ENCODE measurements at regions of chr1 and their contacts with region 1.

Region 1: GRCh38 chr1:86018283-86018923 is 138.2 kb downstream of the COL24A1 start:
- DNase-seq: peak; percentile 40
- H3K4me3 ChIP-seq: no peak overlapping the region
- H3K27ac ChIP-seq: no peak overlapping the region
- H3K4me1 ChIP-seq: no peaks in the 10 kb centered on the region
- CTCF ChIP-seq: peak; percentile 97

Region 2: DNA sequence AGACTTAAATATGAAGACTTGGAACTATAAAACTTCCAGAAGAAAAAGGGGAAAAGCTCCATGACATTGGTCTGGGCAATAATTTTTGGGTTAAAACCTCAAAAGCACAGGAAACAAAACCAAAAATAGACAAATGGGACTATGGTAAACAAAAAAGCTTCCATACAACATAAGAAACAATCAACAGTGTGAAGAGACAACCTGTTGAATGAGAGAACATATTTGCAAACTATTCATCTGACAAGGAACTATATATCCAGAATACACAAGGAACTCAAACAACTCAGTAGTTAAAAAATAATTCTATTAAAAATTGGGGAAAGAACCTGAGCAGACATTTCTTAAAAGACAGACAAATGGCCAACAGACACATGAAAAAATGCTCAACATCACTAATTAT is 117.5 kb before region 1 on chr1:
- CTCF ChIA-PET with region 1: no interaction called
- POLR2A ChIA-PET with region 1: no interaction called
- intact Hi-C with region 1: loop called (anchors 10 kb)
- DNase-seq: no peak
- H3K4me3 ChIP-seq: no peak overlapping the region
- H3K27ac ChIP-seq: no peak overlapping the region
- H3K4me1 ChIP-seq: no peaks in the 10 kb centered on the region
- CTCF ChIP-seq: no peak

Measured in OCI-LY7 (cell line).